ENCODE measurements at regions of chr12 and their contacts with region 1.

Region 1: DNA sequence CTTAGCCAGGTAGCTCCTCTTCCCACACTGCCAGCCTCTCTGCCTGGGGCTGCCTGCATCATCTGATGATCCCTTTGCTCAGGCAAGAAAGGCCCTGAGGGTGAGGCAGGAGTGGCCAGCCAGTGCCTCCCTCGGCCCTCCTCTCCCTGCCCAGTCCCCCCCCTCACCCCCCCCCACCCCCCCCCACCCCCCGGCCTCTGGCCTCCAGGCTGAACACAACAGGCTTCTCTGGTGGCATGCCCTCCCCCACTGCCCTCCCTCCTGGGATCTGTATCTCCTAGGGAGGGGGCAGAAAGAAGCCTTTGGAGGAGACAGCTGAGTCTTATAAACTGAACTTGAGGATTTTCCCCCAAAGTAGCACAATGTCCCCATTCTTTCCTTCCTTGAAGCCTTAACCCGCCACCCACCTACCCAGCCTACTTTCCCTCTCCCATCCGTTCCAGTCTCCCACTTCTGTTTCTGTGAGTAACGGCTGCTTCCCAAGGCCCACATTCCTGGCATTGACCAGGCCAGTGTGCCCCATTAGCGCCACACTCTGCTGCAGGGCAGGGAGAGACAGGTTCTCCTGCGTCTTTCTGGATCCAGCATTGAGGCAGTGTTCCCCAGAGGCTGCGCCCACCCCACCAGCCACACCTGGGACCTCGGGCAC is 82.1 kb downstream of the B4GALNT3 start:
- DNase-seq: no peak
- ATAC-seq: no peak
- H3K4me3 ChIP-seq: no peak overlapping the region
- H3K27ac ChIP-seq: no peak overlapping the region
- H3K4me1 ChIP-seq: peaks cover 0 to 7% of the 10 kb centered on the region in 2 experiments; a peak in 2 of 5 replicates
- H3K27me3 ChIP-seq: peaks cover 3 to 26% of the 10 kb centered on the region in 2 experiments; a peak in 3 of 5 replicates
- CTCF ChIP-seq: no peak
- EP300 ChIP-seq: no peak
- POLR2A ChIP-seq: no peak
- RAD21 ChIP-seq: no peak

Region 2: DNA sequence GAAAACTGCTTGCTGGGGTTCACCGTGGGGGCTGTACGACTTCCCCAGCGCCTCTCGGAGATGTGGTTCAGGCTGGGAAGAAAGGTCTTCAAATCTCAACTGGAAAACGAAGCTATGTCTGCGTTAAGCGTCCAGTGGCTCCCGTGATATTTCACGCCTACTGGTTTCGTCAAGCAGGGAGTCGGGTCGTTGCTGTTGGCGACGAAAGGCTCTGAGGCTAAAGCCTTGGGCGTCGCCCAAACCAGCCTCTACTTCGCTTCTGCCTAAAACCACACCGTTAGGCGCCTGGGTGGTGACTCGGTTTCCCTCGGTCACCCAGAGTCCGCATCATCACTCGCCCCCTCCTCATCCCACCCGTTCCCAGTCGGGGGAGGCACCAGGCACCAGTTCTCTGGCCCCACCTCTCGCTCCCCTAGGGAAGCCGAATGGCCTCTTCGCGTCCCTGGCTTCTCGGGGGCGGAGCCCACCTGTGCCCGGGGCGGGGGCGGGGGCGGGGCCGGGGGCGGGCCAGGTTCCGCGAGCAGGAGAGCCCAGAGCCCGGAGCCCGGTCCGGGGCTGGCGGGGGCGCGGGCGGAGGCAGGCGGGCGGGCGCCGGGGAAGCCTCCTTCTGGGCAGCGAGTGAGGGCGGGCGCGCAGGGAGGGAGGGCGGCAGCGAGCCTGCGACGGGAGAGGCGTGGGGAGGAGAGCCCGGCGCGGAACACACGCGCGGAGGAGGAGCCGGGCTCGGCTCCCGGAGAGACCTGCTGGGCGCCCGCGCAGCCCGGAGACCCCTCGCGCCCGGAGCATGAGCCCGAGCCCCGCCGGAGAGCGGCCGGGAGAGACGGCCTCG is 82.2 kb before region 1 on chr12 and contains the start of gene B4GALNT3:
- CTCF ChIA-PET with region 1: interaction called, 48 read pairs
- POLR2A ChIA-PET with region 1: no interaction called
- in situ Hi-C with region 1: loop called (anchors 5 kb)
- intact Hi-C with region 1: loop called (anchors 2 kb)
- DNase-seq: peak; percentile 21 to 83 (median 72)
- ATAC-seq: peak; percentile 86
- H3K4me3 ChIP-seq: no peak within 1 kb of the TSS
- H3K27ac ChIP-seq: no peak within 1 kb of the TSS
- H3K4me1 ChIP-seq: peaks cover 0 to 16% of the 10 kb centered on the region in 2 experiments; a peak in 2 of 5 replicates
- H3K27me3 ChIP-seq: peaks cover 12 to 33% of the 10 kb centered on the region in 2 experiments
- CTCF ChIP-seq: no peak
- EP300 ChIP-seq: no peak
- POLR2A ChIP-seq: no peak
- RAD21 ChIP-seq: no peak
- polyA plus RNA-seq, gene B4GALNT3: not detected